ENCODE measurements at regions of chr2 and their contacts with region 1.

Region 1: GRCh38 chr2:197011799-197012641 is 85.5 kb upstream of the PGAP1 start:
- DNase-seq: peak; percentile 29
- ATAC-seq: peak; percentile 83
- H3K4me3 Mint-ChIP-seq: no peak overlapping the region
- H3K27ac Mint-ChIP-seq: peak overlapping the region; percentile 81
- H3K4me1 Mint-ChIP-seq: no peaks in the 10 kb centered on the region
- H3K27me3 Mint-ChIP-seq: no peaks in the 10 kb centered on the region
- CTCF ChIP-seq: peak; percentile 83

Region 2: GRCh38 chr2:196875414-196875813 is 136.6 kb before region 1 on chr2:
- CTCF ChIA-PET with region 1: no interaction called
- POLR2A ChIA-PET with region 1: no interaction called
- intact Hi-C with region 1: no loop called
- DNase-seq: no peak
- ATAC-seq: peak; percentile 81
- H3K4me3 Mint-ChIP-seq: no peak overlapping the region
- H3K27ac Mint-ChIP-seq: no peak overlapping the region
- H3K4me1 Mint-ChIP-seq: peaks cover 10% of the 10 kb centered on the region
- H3K27me3 Mint-ChIP-seq: no peaks in the 10 kb centered on the region
- CTCF ChIP-seq: no peak

Region 3: GRCh38 chr2:197037863-197038398 is 25.9 kb after region 1 on chr2:
- CTCF ChIA-PET with region 1: interaction called, 12 read pairs
- POLR2A ChIA-PET with region 1: no interaction called
- intact Hi-C with region 1: no loop called
- DNase-seq: no peak
- ATAC-seq: peak; percentile 45
- H3K4me3 Mint-ChIP-seq: no peak overlapping the region
- H3K27ac Mint-ChIP-seq: peak overlapping the region; percentile 46
- H3K4me1 Mint-ChIP-seq: peaks cover 47% of the 10 kb centered on the region
- H3K27me3 Mint-ChIP-seq: no peaks in the 10 kb centered on the region
- CTCF ChIP-seq: no peak

Region 4: GRCh38 chr2:197378494-197379307 is 366.7 kb after region 1 on chr2:
- CTCF ChIA-PET with region 1: interaction called, 5 read pairs
- POLR2A ChIA-PET with region 1: no interaction called
- intact Hi-C with region 1: loop called (anchors 5 kb)
- DNase-seq: peak; percentile 71
- ATAC-seq: peak; percentile 86
- H3K4me3 Mint-ChIP-seq: no peak overlapping the region
- H3K27ac Mint-ChIP-seq: no peak overlapping the region
- H3K4me1 Mint-ChIP-seq: peaks cover 24% of the 10 kb centered on the region
- H3K27me3 Mint-ChIP-seq: no peaks in the 10 kb centered on the region
- CTCF ChIP-seq: peak; percentile 92

Measured in activated CD8-positive, alpha-beta T cell treated with anti-CD3 and anti-CD28 coated beads for 36 hours (primary cell).